HepG2 (cell line): ENCODE measurements at regions of chr7 and their contacts with region 1.

Region 1: GRCh38 chr7:113421696-113422330 is 303.5 kb upstream of the SMIM30 start:
- DNase-seq: peak; percentile 81
- ATAC-seq: peak; percentile 100
- H3K4me3 ChIP-seq: no peak overlapping the region
- H3K27ac ChIP-seq: no peak overlapping the region
- H3K4me1 ChIP-seq: no peaks in the 10 kb centered on the region
- H3K27me3 ChIP-seq: no peaks in the 10 kb centered on the region
- CTCF ChIP-seq: peak; percentile 89
- EP300 ChIP-seq: no peak
- POLR2A ChIP-seq: no peak
- RAD21 ChIP-seq: peak; percentile 62

Region 2: DNA sequence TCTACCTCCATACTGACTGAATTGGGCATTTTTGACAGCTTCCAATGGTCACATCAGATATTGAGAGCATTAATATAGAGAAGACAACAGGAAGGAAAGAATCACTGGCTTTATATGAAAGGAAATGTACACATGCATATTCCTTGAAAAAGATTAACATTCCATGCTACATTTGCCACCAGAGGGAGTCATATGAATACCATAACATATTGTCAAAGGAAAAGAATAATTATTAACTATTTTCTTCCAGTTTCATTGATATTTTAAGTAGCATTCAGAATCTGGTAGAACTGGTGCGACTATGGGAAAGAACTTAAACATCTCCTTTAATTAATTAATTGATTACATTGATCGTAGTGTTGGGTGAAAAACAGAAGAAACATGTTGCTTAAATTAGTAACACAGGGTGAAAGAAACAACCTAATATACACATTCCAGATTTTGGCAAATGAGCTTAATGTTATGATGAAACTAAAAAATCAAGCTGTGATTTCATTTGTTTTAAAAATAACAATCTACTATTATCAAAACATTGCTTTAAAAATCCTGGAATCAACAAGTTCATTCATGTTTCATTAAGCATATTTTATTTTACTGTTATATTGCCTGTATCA is 406.7 kb before region 1 on chr7:
- CTCF ChIA-PET with region 1: interaction called, 7 read pairs
- POLR2A ChIA-PET with region 1: no interaction called
- in situ Hi-C with region 1: no loop called
- intact Hi-C with region 1: loop called (anchors 1 kb)
- DNase-seq: peak; percentile 11
- ATAC-seq: no peak
- H3K4me3 ChIP-seq: no peak overlapping the region
- H3K27ac ChIP-seq: no peak overlapping the region
- H3K4me1 ChIP-seq: no peaks in the 10 kb centered on the region
- H3K27me3 ChIP-seq: no peaks in the 10 kb centered on the region
- CTCF ChIP-seq: peak; percentile 19; the same call in 1 of the 2 replicates
- EP300 ChIP-seq: no peak
- POLR2A ChIP-seq: no peak
- RAD21 ChIP-seq: no peak

Region 3: GRCh38 chr7:113159746-113160339 is 262.0 kb before region 1 on chr7:
- CTCF ChIA-PET with region 1: interaction called, 9 read pairs
- POLR2A ChIA-PET with region 1: no interaction called
- in situ Hi-C with region 1: loop called (anchors 25 kb)
- intact Hi-C with region 1: loop called (anchors 1 kb)
- DNase-seq: peak; percentile 30
- ATAC-seq: peak; percentile 87
- H3K4me3 ChIP-seq: no peak overlapping the region
- H3K27ac ChIP-seq: no peak overlapping the region
- H3K4me1 ChIP-seq: no peaks in the 10 kb centered on the region
- H3K27me3 ChIP-seq: no peaks in the 10 kb centered on the region
- CTCF ChIP-seq: peak; percentile 57
- EP300 ChIP-seq: no peak
- POLR2A ChIP-seq: no peak
- RAD21 ChIP-seq: no peak

Region 4: DNA sequence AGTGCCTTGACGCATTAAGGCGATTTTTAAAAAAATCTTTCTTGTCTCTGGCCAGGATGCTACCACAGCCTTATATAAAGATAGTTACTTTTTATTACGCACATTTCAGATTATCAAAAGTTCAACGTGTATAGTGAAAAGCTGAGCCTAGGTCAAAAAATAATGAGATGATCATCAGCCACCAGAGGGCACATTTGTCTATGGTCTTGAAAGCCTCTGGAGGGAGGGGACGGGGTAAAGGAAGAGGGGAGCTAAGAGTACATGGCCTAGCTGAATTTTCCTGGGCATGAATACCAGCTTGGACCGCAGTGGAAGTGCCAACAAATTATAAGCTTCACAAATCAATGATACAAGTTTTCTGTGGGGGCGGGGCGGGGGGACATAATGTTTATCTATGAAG is 17.6 kb before region 1 on chr7:
- CTCF ChIA-PET with region 1: interaction called, 7 read pairs
- POLR2A ChIA-PET with region 1: no interaction called
- in situ Hi-C with region 1: no loop called
- intact Hi-C with region 1: loop called (anchors 1 kb)
- DNase-seq: peak; percentile 6
- ATAC-seq: peak; percentile 81
- H3K4me3 ChIP-seq: no peak overlapping the region
- H3K27ac ChIP-seq: no peak overlapping the region
- H3K4me1 ChIP-seq: no peaks in the 10 kb centered on the region
- H3K27me3 ChIP-seq: no peaks in the 10 kb centered on the region
- CTCF ChIP-seq: peak; percentile 47
- EP300 ChIP-seq: no peak
- POLR2A ChIP-seq: no peak
- RAD21 ChIP-seq: no peak

Region 5: DNA sequence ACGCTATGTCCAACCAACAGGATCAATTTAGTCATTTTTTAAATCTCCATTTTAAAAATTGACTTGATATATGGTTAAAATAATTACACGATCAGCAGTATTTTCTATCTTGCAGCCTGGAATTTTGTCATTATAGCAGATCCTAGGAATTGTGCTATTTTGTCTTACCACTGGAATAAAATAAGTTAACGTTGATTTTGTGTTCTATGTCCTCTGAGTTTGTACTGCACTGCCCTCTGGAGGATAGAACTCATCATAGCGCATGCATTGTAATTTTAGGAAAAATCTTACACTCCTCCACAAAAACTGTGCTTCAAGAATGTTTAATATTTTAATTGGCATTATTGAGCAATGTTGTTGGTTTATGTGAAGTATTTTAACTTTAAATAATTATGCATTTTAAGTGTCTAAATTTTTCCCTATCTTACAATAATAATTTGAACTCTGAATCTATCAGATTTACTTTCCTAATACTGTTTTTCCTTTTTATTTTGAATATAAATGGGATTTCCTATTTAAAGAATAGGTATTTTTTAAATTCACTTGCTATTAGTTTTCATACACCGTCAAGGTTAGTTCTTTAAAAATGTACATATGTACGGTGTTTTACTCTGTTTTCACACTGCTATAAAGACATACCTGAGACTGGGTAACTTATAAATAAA is 276.9 kb after region 1 on chr7:
- CTCF ChIA-PET with region 1: no interaction called
- POLR2A ChIA-PET with region 1: no interaction called
- in situ Hi-C with region 1: no loop called
- intact Hi-C with region 1: loop called (anchors 5 kb)
- DNase-seq: peak; percentile 15
- ATAC-seq: peak; percentile 45; the same call in 2 of the 3 replicates
- H3K4me3 ChIP-seq: no peak overlapping the region
- H3K27ac ChIP-seq: no peak overlapping the region
- H3K4me1 ChIP-seq: no peaks in the 10 kb centered on the region
- H3K27me3 ChIP-seq: no peaks in the 10 kb centered on the region
- CTCF ChIP-seq: peak; percentile 63
- EP300 ChIP-seq: no peak
- POLR2A ChIP-seq: no peak
- RAD21 ChIP-seq: no peak